Esophagus muscularis mucosa (tissue), 4 donors: ENCODE measurements at regions of chr10 and their contacts with region 1.

Region 1: GRCh38 chr10:78442836-78443550 is 409.3 kb downstream of the RPS24 start:
- DNase-seq: no peak
- H3K4me3 ChIP-seq: no peak overlapping the region
- H3K27ac ChIP-seq: no peak overlapping the region
- H3K4me1 ChIP-seq: peaks cover 2 to 29% (median 28%) of the 10 kb centered on the region in 4 donors
- H3K27me3 ChIP-seq: no peaks in the 10 kb centered on the region
- CTCF ChIP-seq: no peak
- EP300 ChIP-seq: no peak
- POLR2A ChIP-seq: no peak

Region 2: GRCh38 chr10:78278058-78278404 is 165.0 kb before region 1 on chr10:
- intact Hi-C with region 1: no loop called
- DNase-seq: no peak
- H3K4me3 ChIP-seq: no peak overlapping the region
- H3K27ac ChIP-seq: peak overlapping the region in 3 of 4 donors; percentile 35 to 76 (median 57)
- H3K4me1 ChIP-seq: peaks cover 4 to 15% (median 10%) of the 10 kb centered on the region in 4 donors
- H3K27me3 ChIP-seq: no peaks in the 10 kb centered on the region
- CTCF ChIP-seq: no peak
- EP300 ChIP-seq: no peak
- POLR2A ChIP-seq: no peak

Region 3: GRCh38 chr10:78316451-78316931 is 126.5 kb before region 1 on chr10:
- intact Hi-C with region 1: loop called (anchors 10 kb)
- DNase-seq: peak; percentile 88
- H3K4me3 ChIP-seq: no peak overlapping the region
- H3K27ac ChIP-seq: peak overlapping the region; percentile 50 to 72 (median 60)
- H3K4me1 ChIP-seq: peaks cover 14 to 31% (median 22%) of the 10 kb centered on the region in 4 donors
- H3K27me3 ChIP-seq: no peaks in the 10 kb centered on the region
- CTCF ChIP-seq: no peak
- EP300 ChIP-seq: no peak
- POLR2A ChIP-seq: no peak